ENCODE measurements at regions of chr21 and their contacts with region 1.

Region 1: DNA sequence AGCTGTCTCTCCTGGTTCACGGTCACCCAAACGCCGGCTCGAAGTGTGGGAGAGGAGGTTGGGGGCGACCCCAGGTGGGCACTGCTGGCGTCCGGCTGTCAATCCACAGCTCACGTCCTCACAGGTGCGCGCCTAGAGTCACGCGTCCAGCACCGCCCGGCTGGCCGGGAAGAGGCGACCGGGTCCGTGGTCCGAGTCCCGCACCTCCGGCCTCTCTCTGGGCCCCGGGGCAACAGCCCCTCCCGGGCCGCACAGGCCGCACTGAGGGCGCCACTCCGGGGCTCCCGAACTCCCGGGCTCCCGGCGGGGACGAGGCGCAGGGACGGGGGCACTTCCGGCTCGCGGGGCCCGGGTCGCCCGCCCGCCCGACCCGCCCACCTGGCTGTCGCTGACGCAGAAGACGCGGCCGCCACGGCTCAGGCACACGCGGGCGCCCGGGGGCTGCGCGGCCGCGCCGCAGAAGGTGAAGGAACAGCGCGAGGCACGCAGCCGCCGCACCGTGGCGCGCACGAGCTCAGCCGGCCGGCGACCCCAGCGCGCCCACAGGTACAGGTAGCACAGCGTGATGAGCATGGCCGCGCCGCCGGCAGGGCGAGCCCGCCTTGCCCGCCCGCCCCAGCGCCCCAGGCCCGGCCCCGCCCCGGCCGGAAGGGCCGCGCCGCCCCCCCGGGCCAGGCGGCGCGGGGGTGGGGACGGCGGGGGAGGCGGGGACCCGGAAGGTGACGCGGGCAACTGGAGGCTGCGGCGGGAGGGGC is at the start of gene HLCS:
- DNase-seq: peak; percentile 62 to 76
- H3K4me3 ChIP-seq: peak within 1 kb of the TSS; percentile 75
- H3K27ac ChIP-seq: peak within 1 kb of the TSS; percentile 76
- H3K4me1 ChIP-seq: peaks cover 14% of the 10 kb centered on the region; the same call in 1 of the 2 replicates
- H3K27me3 ChIP-seq: no peaks in the 10 kb centered on the region
- CTCF ChIP-seq: no peak
- total RNA-seq, gene HLCS: 21.6 and 22.1 TPM in 2 replicates

Region 2: GRCh38 chr21:35075546-35075945 is 1890.7 kb before region 1 on chr21:
- CTCF ChIA-PET with region 1: no interaction called
- POLR2A ChIA-PET with region 1: no interaction called
- intact Hi-C with region 1: no loop called
- DNase-seq: no peak
- H3K4me3 ChIP-seq: no peak overlapping the region
- H3K27ac ChIP-seq: no peak overlapping the region
- H3K4me1 ChIP-seq: no peaks in the 10 kb centered on the region
- H3K27me3 ChIP-seq: no peaks in the 10 kb centered on the region
- CTCF ChIP-seq: no peak

Region 3: DNA sequence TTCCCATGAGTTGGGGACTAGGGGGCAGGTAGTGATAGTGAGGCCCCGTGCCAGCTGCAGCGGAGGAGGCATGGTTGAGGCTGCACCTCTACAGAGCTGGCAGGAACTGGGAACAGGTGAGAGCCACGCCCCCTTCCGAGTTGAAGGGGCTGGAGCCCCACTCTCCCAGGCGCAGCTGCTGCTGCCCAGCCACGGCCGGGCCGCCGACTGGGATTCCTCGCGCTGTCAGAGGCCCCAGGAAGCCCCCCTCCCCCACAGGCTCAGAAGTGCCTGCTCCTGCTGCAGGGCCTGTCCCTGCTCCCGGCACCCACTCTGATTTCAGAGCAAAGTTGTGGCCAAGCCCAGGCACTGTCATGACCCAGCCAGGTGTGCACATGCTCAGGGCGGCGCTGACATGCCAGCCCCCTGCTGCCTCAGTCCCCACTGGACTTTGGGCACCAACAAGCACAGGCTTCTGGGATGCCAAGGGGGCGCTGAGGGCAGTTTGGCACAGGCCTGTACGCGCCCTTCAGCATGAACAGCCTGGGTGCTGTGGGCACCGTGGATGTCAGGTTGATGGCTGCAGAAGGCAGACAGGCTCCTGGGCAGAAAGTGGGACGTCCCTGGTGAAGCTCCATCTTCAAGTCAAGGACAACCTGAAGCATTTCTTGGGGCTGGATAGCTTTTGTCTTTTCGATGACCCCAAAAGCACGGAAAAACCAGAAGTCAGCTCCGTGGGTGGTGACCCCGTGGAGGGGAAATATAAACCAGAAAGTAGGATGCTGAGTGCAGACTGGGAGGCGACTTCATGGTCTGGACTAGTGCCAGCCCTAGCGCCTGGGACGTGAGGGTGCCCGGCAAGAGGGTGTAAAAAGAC is 145.8 kb before region 1 on chr21:
- CTCF ChIA-PET with region 1: no interaction called
- POLR2A ChIA-PET with region 1: no interaction called
- intact Hi-C with region 1: no loop called
- DNase-seq: no peak
- H3K4me3 ChIP-seq: no peak overlapping the region
- H3K27ac ChIP-seq: no peak overlapping the region
- H3K4me1 ChIP-seq: no peaks in the 10 kb centered on the region
- H3K27me3 ChIP-seq: no peaks in the 10 kb centered on the region
- CTCF ChIP-seq: no peak

Region 4: DNA sequence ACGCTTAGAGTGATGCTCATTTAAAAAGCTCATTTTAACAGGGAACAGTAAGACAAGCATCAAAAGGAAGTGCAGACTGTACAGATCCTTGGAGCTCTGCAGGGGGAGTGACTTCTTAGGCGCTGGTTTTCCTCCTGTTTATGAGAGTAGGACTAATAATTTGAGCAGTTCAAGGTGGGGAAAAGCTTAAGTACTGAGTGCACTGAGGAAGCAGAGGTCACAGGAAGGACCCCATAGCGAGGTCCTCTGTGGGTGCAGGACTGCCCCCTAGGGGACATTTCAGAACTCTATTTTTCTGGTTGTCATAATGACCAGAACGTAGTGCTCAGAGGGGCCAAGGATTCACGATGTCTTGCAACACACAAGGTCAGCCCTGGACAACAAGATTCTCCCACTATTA is 111.9 kb before region 1 on chr21:
- CTCF ChIA-PET with region 1: no interaction called
- POLR2A ChIA-PET with region 1: no interaction called
- intact Hi-C with region 1: no loop called
- DNase-seq: no peak
- H3K4me3 ChIP-seq: no peak overlapping the region
- H3K27ac ChIP-seq: no peak overlapping the region
- H3K4me1 ChIP-seq: peaks cover 14% of the 10 kb centered on the region
- H3K27me3 ChIP-seq: no peaks in the 10 kb centered on the region
- CTCF ChIP-seq: peak; percentile 59

Region 5: GRCh38 chr21:36923270-36923669 is 43.0 kb before region 1 on chr21:
- CTCF ChIA-PET with region 1: no interaction called
- POLR2A ChIA-PET with region 1: no interaction called
- intact Hi-C with region 1: no loop called
- DNase-seq: no peak
- H3K4me3 ChIP-seq: no peak overlapping the region
- H3K27ac ChIP-seq: no peak overlapping the region
- H3K4me1 ChIP-seq: no peaks in the 10 kb centered on the region
- H3K27me3 ChIP-seq: no peaks in the 10 kb centered on the region
- CTCF ChIP-seq: no peak

Region 6: DNA sequence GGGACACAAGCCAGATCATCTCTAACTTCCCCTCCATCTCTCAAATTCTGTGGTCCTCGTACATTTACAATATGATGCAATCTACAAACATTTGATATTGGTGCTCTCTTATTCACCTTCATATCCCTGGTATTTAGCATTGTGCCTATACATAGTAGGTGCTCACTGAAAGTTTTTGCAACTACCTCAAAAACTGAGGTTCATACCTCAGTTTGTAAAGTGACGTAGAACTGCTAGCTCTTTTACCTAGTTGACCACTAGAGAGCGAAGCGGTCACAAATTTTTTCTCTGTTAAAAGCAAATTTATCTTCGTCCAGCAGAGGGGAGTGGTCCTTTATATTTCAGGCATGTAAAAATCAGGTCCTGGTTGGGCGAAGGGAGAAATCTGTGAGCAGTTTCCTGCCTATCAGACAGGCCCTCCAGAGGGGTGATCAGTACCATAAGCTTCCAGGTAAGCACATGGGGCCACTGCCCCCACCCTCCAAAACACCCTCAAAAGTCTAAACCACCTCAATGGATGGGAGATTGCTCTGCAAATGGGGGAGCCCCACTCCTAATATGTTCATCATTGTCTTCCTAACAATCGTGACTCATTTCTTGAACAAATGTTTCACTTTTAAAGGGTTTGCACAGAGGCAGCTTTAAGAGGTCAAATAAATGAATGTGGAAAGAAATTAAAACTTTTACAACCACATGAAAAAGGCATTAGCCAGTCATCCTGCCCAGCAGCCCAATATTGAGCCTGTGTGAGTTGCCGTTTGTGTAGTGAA is 10.8 kb after region 1 on chr21:
- CTCF ChIA-PET with region 1: interaction called, 5 read pairs
- POLR2A ChIA-PET with region 1: interaction called, 10 read pairs
- intact Hi-C with region 1: no loop called
- DNase-seq: peak; percentile 27 to 41
- H3K4me3 ChIP-seq: no peak overlapping the region
- H3K27ac ChIP-seq: no peak overlapping the region
- H3K4me1 ChIP-seq: peaks cover 4% of the 10 kb centered on the region; the same call in 1 of the 2 replicates
- H3K27me3 ChIP-seq: no peaks in the 10 kb centered on the region
- CTCF ChIP-seq: peak; percentile 62

Region 7: DNA sequence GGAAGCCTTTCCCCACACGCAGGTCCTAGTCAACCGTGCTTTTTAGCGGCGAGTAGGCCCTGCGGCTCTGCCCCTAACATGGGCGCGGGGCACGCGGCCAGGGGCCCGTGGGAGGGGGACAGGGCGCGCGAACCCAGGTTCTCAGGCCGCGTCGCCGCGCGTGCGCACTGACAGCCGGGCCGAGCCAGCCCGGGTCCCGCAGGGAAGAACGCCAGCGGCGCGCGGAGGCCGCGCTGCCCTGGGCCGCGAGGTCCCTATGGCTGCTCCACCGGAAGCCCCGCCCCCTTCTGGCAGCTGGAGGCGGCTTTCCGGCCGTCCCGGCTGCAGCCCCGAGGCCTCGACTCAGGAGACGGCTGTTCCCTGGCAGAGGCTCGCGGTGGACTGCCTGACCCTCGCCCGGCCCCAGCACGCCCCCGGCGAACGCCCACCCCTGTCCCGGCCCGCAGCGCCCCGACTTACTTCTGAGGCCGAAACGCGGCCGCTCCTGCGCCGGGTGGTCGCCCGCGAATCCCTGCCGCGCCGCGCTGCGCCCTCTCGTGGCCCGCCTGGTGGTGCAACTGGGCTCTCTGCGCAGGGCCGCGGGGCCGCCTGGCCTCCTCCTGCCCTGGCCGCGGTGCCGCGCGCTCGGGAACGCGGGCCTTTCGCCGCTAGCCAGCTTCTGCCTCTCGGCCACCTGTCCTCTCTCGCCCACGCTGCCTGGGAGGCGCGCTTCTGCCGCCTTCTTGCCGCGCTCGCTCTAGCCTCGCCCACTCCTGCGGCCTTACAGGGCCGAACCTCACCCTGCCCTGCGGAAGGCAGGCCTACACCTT is 23.7 kb after region 1 on chr21:
- CTCF ChIA-PET with region 1: interaction called, 10 read pairs
- POLR2A ChIA-PET with region 1: no interaction called
- intact Hi-C with region 1: loop called (anchors 2 kb)
- DNase-seq: peak; percentile 63 to 91
- H3K4me3 ChIP-seq: peak overlapping the region; percentile 60
- H3K27ac ChIP-seq: peak overlapping the region; percentile 51
- H3K4me1 ChIP-seq: peaks cover 14% of the 10 kb centered on the region; the same call in 1 of the 2 replicates
- H3K27me3 ChIP-seq: no peaks in the 10 kb centered on the region
- CTCF ChIP-seq: peak; percentile 69